Endothelial cell of umbilical vein (primary cell): ENCODE measurements at regions of chr16 and their contacts with region 1.

Region 1: GRCh38 chr16:77236063-77236511 is 36.9 kb downstream of the SYCE1L start:
- DNase-seq: peak; percentile 87
- H3K4me3 ChIP-seq: no peak overlapping the region
- H3K27ac ChIP-seq: no peak overlapping the region
- H3K4me1 ChIP-seq: no peaks in the 10 kb centered on the region
- H3K27me3 ChIP-seq: no peaks in the 10 kb centered on the region
- CTCF ChIP-seq: peak; percentile 99 to 100
- POLR2A ChIP-seq: no peak

Region 2: DNA sequence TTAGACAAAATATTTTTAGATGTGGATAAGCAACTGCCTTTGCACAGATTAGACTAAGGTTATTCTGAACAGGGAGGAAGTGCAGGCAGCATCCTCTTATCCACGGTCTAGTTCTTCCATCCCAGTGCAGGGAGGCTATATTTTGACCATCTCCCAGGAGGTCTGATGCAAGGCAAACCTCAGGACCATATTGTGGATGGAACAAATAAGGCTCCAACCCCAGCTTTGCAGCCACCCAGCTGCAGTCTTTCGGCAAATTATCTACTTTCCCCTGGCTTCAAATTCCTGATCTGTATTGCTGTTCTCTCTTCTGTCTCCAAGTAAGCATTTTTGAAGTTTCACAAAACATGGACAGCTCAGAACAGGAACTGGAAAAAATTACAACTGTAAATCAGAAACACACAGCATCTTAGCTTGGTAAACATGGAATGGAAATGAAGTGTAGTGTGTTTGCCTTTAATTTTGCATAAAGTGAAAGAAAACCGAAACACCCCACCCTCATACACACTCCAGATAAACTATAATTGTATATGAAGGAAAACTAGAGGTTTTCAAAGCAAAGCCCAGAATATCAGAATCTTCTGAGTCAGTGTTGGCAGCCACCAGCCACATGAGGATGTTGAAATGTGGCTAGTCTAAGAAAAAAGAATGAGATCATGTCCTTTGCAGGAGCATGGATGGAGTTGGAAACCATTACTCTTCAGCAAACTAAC is 78.6 kb before region 1 on chr16:
- CTCF ChIA-PET with region 1: no interaction called
- POLR2A ChIA-PET with region 1: no interaction called
- dilution Hi-C with region 1: no loop called
- intact Hi-C with region 1: no loop called
- DNase-seq: no peak
- H3K4me3 ChIP-seq: no peak overlapping the region
- H3K27ac ChIP-seq: no peak overlapping the region
- H3K4me1 ChIP-seq: no peaks in the 10 kb centered on the region
- H3K27me3 ChIP-seq: peaks cover 0 to 1% of the 10 kb centered on the region in 2 experiments
- CTCF ChIP-seq: no peak
- POLR2A ChIP-seq: no peak

Region 3: GRCh38 chr16:77211880-77212740 is 24.0 kb before region 1 on chr16:
- CTCF ChIA-PET with region 1: no interaction called
- POLR2A ChIA-PET with region 1: no interaction called
- dilution Hi-C with region 1: no loop called
- intact Hi-C with region 1: loop called (anchors 2 kb)
- DNase-seq: peak; percentile 48
- H3K4me3 ChIP-seq: peak overlapping the region; percentile 43 to 70 (median 57)
- H3K27ac ChIP-seq: peak overlapping the region; percentile 48
- H3K4me1 ChIP-seq: peaks cover 17% of the 10 kb centered on the region
- H3K27me3 ChIP-seq: no peaks in the 10 kb centered on the region
- CTCF ChIP-seq: no peak
- POLR2A ChIP-seq: no peak

Region 4: GRCh38 chr16:77376358-77376757 is 140.3 kb after region 1 on chr16:
- CTCF ChIA-PET with region 1: no interaction called
- POLR2A ChIA-PET with region 1: no interaction called
- dilution Hi-C with region 1: no loop called
- intact Hi-C with region 1: loop called (anchors 10 kb)
- DNase-seq: no peak
- H3K4me3 ChIP-seq: no peak overlapping the region
- H3K27ac ChIP-seq: no peak overlapping the region
- H3K4me1 ChIP-seq: no peaks in the 10 kb centered on the region
- H3K27me3 ChIP-seq: no peaks in the 10 kb centered on the region
- CTCF ChIP-seq: peak in 1 of 2 donors; percentile 17
- POLR2A ChIP-seq: no peak

Region 5: DNA sequence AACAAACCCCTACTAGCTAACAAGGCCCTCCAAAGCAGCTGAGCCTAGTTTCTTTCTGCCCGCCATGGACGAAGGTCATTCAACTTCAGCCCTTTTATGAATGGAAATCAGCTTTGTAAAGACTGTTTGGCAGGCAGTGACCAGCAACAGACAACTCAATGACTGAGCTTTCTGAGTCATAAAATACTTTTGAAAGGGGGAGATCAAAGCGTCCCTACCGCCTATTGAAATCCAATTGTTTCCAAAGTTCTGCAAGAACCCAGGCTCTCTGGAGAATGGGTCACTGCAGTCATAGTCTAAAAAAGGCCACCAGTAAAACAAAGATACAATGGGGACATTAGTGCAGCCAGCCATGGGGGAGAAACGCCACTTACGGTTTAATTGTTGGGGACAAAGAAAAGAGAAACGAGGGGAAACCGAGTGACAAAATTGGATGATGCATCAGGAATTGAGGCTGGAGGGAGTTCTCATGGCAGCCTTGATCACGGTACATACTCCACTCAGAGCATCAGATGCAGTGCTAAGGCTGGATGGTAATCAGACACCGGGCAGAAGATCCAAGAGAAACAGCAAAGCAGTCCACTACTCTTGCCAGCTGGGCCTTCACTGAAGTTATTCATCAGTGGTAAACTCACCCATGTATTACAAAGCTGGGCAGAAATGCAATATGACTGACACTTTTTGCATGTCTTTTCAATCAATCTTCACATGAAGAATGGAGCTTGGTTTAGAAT is 189.0 kb after region 1 on chr16:
- CTCF ChIA-PET with region 1: no interaction called
- POLR2A ChIA-PET with region 1: no interaction called
- dilution Hi-C with region 1: no loop called
- intact Hi-C with region 1: no loop called
- DNase-seq: no peak
- H3K4me3 ChIP-seq: no peak overlapping the region
- H3K27ac ChIP-seq: no peak overlapping the region
- H3K4me1 ChIP-seq: no peaks in the 10 kb centered on the region
- H3K27me3 ChIP-seq: no peaks in the 10 kb centered on the region
- CTCF ChIP-seq: no peak
- POLR2A ChIP-seq: no peak

Region 6: GRCh38 chr16:77457046-77457445 is 221.0 kb after region 1 on chr16:
- CTCF ChIA-PET with region 1: interaction called, 3 read pairs
- POLR2A ChIA-PET with region 1: no interaction called
- dilution Hi-C with region 1: no loop called
- intact Hi-C with region 1: loop called (anchors 1 kb)
- DNase-seq: peak; percentile 93
- H3K4me3 ChIP-seq: peak overlapping the region in 1 of 3 experiments; percentile 60
- H3K27ac ChIP-seq: peak overlapping the region; percentile 95
- H3K4me1 ChIP-seq: peaks cover 19% of the 10 kb centered on the region
- H3K27me3 ChIP-seq: no peaks in the 10 kb centered on the region
- CTCF ChIP-seq: no peak
- POLR2A ChIP-seq: no peak

Region 7: GRCh38 chr16:77675464-77676324 is 439.6 kb after region 1 on chr16:
- CTCF ChIA-PET with region 1: interaction called, 8 read pairs
- POLR2A ChIA-PET with region 1: no interaction called
- dilution Hi-C with region 1: no loop called
- intact Hi-C with region 1: loop called (anchors 1 kb)
- DNase-seq: peak; percentile 75
- H3K4me3 ChIP-seq: no peak overlapping the region
- H3K27ac ChIP-seq: no peak overlapping the region
- H3K4me1 ChIP-seq: no peaks in the 10 kb centered on the region
- H3K27me3 ChIP-seq: peaks cover 0 to 6% of the 10 kb centered on the region in 2 experiments
- CTCF ChIP-seq: peak; percentile 74 to 96
- POLR2A ChIP-seq: no peak

Region 8: DNA sequence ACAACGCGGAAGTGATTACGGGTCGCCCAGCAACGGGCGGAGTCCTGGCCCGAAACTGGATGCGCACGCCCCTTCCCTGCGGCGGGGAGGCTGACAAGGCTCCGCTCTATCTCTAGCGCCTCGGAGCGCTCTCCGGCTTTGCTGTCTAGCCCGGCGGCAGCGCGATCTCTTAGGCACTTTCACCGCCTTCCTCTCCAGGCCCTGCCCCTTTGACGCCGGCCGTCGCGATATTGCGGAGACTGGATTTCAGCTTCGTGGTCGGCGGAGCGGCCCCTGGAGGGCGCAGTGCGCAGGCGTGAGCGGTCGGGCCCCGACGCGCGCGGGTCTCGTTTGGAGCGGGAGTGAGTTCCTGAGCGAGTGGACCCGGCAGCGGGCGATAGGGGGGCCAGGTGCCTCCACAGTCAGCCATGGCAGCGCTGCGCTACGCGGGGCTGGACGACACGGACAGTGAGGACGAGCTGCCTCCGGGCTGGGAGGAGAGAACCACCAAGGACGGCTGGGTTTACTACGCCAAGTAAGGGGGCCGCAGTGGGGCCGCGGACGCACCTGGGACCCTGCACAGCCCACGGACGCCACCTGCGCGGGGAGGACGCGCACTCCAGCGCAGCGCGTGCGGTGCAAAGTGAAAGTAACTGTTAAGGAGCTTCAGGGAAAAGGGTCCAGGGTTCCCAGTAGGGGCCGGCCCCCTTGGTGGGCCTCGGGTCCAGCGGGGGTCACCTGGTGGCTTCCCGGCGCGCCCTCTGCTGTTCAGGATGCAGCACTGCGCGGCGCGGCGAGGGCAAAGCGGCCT is 863.5 kb after region 1 on chr16 and contains the start of gene WWOX:
- CTCF ChIA-PET with region 1: interaction called, 10 read pairs
- POLR2A ChIA-PET with region 1: no interaction called
- dilution Hi-C with region 1: no loop called
- intact Hi-C with region 1: loop called (anchors 1 kb)
- DNase-seq: peak; percentile 99
- H3K4me3 ChIP-seq: peak within 1 kb of the TSS; percentile 47 to 79 (median 54)
- H3K27ac ChIP-seq: peak within 1 kb of the TSS; percentile 55
- H3K4me1 ChIP-seq: peaks cover 9% of the 10 kb centered on the region
- H3K27me3 ChIP-seq: no peaks in the 10 kb centered on the region
- CTCF ChIP-seq: peak; percentile 87 to 96
- POLR2A ChIP-seq: no peak
- total RNA-seq, gene WWOX: 12.0 and 12.5 TPM in 2 replicates